CD14-positive monocyte (primary cell): ENCODE measurements at regions of chr11 and their contacts with region 1.

Region 1: GRCh38 chr11:63768237-63769043 is at the start of gene ZFTA:
- DNase-seq: peak in 2 of 3 donors; percentile 10 to 36
- H3K4me3 ChIP-seq: peak within 1 kb of the TSS; percentile 71 to 91 (median 79)
- H3K4me3 Mint-ChIP-seq: peak within 1 kb of the TSS; percentile 98
- H3K27ac ChIP-seq: peak within 1 kb of the TSS in 1 of 2 donors; percentile 40
- H3K27ac Mint-ChIP-seq: peak within 1 kb of the TSS; percentile 37 to 88 (median 76)
- H3K4me1 ChIP-seq: peaks cover 14 to 27% of the 10 kb centered on the region in 2 donors
- H3K4me1 Mint-ChIP-seq: peaks cover 16% of the 10 kb centered on the region
- H3K27me3 ChIP-seq: peaks cover 19 to 37% of the 10 kb centered on the region in 2 donors
- H3K27me3 Mint-ChIP-seq: peaks cover 24 to 47% (median 30%) of the 10 kb centered on the region in 3 donors
- CTCF ChIP-seq: peak; percentile 89
- polyA plus RNA-seq, gene ZFTA: 1.2 TPM in 1 of 3 donors, not detected in the others

Region 2: GRCh38 chr11:63945477-63946163 is 177.2 kb after region 1 on chr11:
- intact Hi-C with region 1: loop called in 1 of 2 experiments (anchors 5 kb)
- DNase-seq: peak; percentile 32 to 47 (median 42)
- H3K4me3 ChIP-seq: no peak overlapping the region
- H3K4me3 Mint-ChIP-seq: no peak overlapping the region
- H3K27ac ChIP-seq: no peak overlapping the region
- H3K27ac Mint-ChIP-seq: no peak overlapping the region
- H3K4me1 ChIP-seq: peaks cover 11 to 14% of the 10 kb centered on the region in 2 donors
- H3K4me1 Mint-ChIP-seq: peaks cover 17% of the 10 kb centered on the region
- H3K27me3 ChIP-seq: no peaks in the 10 kb centered on the region
- H3K27me3 Mint-ChIP-seq: peaks cover 0 to 3% (median 0%) of the 10 kb centered on the region in 3 donors
- CTCF ChIP-seq: peak; percentile 75

Region 3: GRCh38 chr11:64148200-64148916 is 379.9 kb after region 1 on chr11:
- intact Hi-C with region 1: loop called (anchors 5 to 10 kb)
- DNase-seq: peak; percentile 63 to 67 (median 64)
- H3K4me3 ChIP-seq: no peak overlapping the region
- H3K4me3 Mint-ChIP-seq: no peak overlapping the region
- H3K27ac ChIP-seq: no peak overlapping the region
- H3K27ac Mint-ChIP-seq: peak overlapping the region in 1 of 7 donors; percentile 66
- H3K4me1 ChIP-seq: peaks cover 0 to 9% of the 10 kb centered on the region in 2 donors
- H3K4me1 Mint-ChIP-seq: peaks cover 13% of the 10 kb centered on the region
- H3K27me3 ChIP-seq: no peaks in the 10 kb centered on the region
- H3K27me3 Mint-ChIP-seq: peaks cover 3 to 5% (median 4%) of the 10 kb centered on the region in 3 donors
- CTCF ChIP-seq: peak; percentile 95